Colonic mucosa (tissue), 4 donors: ENCODE measurements at regions of chr6 and their contacts with region 1.

Region 1: DNA sequence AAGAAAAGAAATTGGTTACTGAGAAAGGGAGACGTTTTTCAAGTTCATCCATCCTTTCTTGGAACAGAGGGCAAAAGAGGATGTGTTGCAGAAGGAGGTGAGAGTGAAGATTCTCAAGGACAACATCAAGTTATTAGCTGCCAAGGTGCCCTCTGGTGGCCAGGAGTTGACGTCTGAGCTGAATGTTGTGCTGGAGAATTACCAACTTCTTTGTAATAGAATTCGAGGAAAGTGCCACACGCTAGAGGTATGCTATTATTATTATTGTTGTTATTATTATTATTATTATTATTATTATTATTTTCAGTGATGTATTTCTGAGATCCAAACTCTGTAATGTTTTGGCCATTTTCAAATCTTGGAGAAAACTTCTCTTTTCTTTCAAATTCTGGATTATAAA is 197.0 kb downstream of the UTRN start:
- DNase-seq: peak; percentile 82
- H3K4me3 ChIP-seq: no peak overlapping the region
- H3K27ac ChIP-seq: no peak overlapping the region
- H3K4me1 ChIP-seq: no peaks in the 10 kb centered on the region
- H3K27me3 ChIP-seq: no peaks in the 10 kb centered on the region
- CTCF ChIP-seq: peak; percentile 54

Region 2: DNA sequence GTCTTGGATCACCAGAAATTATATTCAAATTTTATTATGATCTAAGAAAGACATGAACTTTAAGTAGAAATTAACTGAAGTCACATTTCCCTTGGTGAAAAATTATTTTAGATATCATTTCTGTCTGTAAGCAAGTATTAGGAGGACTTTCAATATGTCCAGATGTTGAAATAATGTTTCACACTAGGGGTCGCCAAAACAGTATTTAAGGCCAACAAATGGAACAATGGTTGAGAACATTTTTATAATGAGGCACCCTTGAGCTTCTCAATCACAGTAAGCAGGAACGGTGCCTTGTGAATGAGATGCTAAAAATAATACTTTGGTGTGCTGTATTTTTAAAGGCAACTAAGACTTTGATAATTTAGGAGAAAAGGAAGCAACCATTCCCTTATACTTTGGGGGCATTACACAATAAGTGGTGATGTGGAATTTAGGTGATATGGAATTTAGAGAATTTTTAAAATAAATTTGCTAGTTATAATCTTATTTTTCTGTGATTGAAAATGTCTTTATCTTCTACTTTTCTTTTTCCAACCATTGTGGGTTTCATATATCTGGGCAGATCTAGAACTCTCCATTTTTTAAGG is 377.1 kb before region 1 on chr6:
- intact Hi-C with region 1: loop called (anchors 5 kb)
- DNase-seq: peak; percentile 51
- H3K4me3 ChIP-seq: no peak overlapping the region
- H3K27ac ChIP-seq: no peak overlapping the region
- H3K4me1 ChIP-seq: no peaks in the 10 kb centered on the region
- H3K27me3 ChIP-seq: no peaks in the 10 kb centered on the region
- CTCF ChIP-seq: peak; percentile 55

Region 3: DNA sequence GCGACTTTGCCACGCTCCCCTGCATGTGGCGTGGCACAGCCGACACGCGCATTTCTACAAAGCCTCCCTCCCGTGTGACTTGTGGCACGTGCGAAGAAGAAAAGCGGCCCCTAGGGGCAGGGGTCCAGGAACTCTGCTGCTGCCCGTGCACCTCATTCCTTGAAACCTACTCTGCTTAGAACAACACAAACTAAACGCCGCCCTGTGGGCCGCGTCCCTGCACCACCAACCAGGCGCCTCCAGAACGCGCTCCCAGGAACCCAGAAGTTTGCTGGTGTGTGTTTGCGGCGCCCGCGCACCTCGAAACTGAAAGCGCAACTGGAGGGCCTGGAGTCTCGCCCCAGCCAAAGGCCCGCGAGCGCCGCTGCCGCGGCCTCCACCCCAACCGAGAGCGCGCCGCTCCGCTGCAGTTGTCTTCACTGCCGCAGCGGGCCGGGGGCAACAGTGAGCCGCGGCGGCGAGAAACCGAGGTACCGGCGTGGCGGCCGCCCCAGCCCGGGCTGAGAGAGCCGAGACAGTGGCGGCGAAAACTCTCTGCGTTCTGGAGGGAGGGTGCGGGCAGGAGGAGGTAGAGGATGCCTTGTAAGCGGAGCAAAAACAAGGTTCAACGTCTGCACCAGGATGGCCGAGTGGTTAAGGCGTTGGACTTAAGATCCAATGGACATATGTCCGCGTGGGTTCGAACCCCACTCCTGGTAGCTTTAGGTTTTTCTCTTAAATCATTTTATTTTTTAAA is 266.0 kb before region 1 on chr6:
- intact Hi-C with region 1: loop called (anchors 5 kb)
- DNase-seq: peak; percentile 95
- H3K4me3 ChIP-seq: peak overlapping the region; percentile 57
- H3K27ac ChIP-seq: peak overlapping the region; percentile 97
- H3K4me1 ChIP-seq: peaks cover 5% of the 10 kb centered on the region
- H3K27me3 ChIP-seq: no peaks in the 10 kb centered on the region
- CTCF ChIP-seq: peak; percentile 42

Region 4: GRCh38 chr6:144264270-144265060 is 217.7 kb before region 1 on chr6:
- intact Hi-C with region 1: loop called (anchors 5 kb)
- DNase-seq: no peak
- H3K4me3 ChIP-seq: no peak overlapping the region
- H3K27ac ChIP-seq: no peak overlapping the region
- H3K4me1 ChIP-seq: no peaks in the 10 kb centered on the region
- H3K27me3 ChIP-seq: no peaks in the 10 kb centered on the region
- CTCF ChIP-seq: no peak

Region 5: DNA sequence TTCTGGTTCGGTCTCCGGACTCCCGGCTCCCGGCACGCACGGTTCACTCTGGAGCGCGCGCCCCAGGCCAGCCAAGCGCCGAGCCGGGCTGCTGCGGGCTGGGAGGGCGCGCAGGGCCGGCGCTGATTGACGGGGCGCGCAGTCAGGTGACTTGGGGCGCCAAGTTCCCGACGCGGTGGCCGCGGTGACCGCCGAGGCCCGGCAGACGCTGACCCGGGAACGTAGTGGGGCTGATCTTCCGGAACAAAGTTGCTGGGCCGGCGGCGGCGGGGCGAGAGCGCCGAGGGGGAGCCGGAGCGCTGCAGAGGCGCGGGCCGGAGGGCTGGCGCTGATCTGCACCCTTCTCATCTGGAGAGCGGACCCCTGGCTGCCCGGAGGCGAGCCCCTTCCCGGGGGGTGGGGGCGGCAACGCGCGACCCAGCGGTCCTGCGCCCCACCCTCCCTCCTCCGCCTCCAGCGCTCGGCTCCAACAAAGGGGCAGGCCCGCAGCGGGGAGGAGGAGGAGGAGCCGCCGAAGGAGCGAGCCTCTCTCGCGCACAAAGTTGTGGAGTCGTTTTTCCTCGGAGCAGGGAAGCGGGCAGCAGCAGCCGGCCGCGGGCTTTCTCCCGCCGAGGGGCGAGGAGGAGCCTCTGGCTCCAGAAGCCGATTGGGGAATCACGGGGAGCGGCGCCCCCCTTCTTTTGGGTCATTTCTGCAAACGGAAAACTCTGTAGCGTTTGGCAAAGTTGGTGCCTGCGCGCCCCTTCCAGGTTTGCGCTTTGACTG is 197.2 kb before region 1 on chr6 and contains the start of gene UTRN:
- intact Hi-C with region 1: loop called (anchors 5 kb)
- DNase-seq: peak; percentile 87
- H3K4me3 ChIP-seq: peak within 1 kb of the TSS; percentile 90
- H3K27ac ChIP-seq: peak within 1 kb of the TSS; percentile 97
- H3K4me1 ChIP-seq: no peaks in the 10 kb centered on the region
- H3K27me3 ChIP-seq: no peaks in the 10 kb centered on the region
- CTCF ChIP-seq: no peak
- total RNA-seq, gene UTRN: 72.7 to 80.1 TPM